ENCODE measurements at regions of chr11 and their contacts with region 1.

Region 1: DNA sequence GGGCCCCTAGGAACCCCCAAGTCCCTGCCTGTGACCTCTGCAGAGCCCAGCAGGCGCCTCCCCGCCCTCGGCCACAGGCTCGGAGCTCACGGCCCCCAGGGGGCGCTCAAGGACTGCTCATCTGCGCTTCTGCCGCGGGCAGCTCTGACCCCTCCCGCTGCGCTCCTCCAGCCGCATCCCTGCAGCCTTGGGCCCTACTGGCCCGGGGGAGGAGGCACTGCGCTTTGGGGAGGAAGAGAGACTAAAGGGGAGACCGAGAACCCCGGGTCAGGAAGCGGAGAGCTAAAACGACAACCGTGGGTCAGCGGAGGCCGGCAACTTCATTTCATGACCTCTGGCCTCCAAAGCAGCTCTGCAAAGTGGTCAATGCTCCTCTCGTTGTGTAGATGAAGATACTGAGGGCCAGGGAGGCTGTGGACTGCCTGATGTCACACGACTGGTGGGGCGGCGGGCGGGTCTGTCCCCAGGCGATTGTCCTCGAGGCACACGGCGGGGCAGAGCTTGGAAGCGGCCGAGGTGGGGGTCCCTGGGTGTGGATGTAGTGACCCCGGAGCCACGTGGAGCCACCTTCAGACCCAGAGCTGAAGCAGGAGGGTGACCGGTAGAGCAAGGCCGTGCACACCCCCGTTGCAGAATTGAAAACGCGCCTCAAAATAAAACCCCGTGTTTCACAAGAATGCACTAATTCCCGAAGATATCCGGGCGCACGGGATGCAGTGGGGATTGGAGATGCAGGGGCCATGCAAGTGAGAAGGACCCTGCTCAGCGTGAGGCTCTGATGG is 2.7 kb upstream of the KRTAP5-6 start:
- DNase-seq: peak; percentile 80 to 88
- ATAC-seq: peak; percentile 82 to 95
- H3K4me3 ChIP-seq: peak overlapping the region; percentile 62
- H3K27ac ChIP-seq: peak overlapping the region; percentile 87 to 92
- H3K4me1 ChIP-seq: no peaks in the 10 kb centered on the region
- CTCF ChIP-seq: peak; percentile 88
- EP300 ChIP-seq: no peak
- POLR2A ChIP-seq: no peak
- RAD21 ChIP-seq: peak; percentile 94 to 99

Region 2: GRCh38 chr11:1478544-1478943 is 215.7 kb before region 1 on chr11:
- CTCF ChIA-PET with region 1: no interaction called
- POLR2A ChIA-PET with region 1: no interaction called
- DNase-seq: no peak
- ATAC-seq: no peak
- H3K4me3 ChIP-seq: no peak overlapping the region
- H3K27ac ChIP-seq: no peak overlapping the region
- H3K4me1 ChIP-seq: no peaks in the 10 kb centered on the region
- CTCF ChIP-seq: no peak
- EP300 ChIP-seq: no peak
- POLR2A ChIP-seq: no peak
- RAD21 ChIP-seq: no peak

Region 3: GRCh38 chr11:1706634-1707400 is 12.6 kb after region 1 on chr11:
- CTCF ChIA-PET with region 1: interaction called, 97 read pairs
- POLR2A ChIA-PET with region 1: no interaction called
- DNase-seq: peak; percentile 38 to 67
- ATAC-seq: peak; percentile 77 to 97
- H3K4me3 ChIP-seq: no peak overlapping the region
- H3K27ac ChIP-seq: no peak overlapping the region
- H3K4me1 ChIP-seq: peaks cover 3% of the 10 kb centered on the region; the same call in 1 of the 3 replicates
- CTCF ChIP-seq: peak; percentile 51
- EP300 ChIP-seq: no peak
- POLR2A ChIP-seq: no peak
- RAD21 ChIP-seq: peak; percentile 74 to 82

Region 4: DNA sequence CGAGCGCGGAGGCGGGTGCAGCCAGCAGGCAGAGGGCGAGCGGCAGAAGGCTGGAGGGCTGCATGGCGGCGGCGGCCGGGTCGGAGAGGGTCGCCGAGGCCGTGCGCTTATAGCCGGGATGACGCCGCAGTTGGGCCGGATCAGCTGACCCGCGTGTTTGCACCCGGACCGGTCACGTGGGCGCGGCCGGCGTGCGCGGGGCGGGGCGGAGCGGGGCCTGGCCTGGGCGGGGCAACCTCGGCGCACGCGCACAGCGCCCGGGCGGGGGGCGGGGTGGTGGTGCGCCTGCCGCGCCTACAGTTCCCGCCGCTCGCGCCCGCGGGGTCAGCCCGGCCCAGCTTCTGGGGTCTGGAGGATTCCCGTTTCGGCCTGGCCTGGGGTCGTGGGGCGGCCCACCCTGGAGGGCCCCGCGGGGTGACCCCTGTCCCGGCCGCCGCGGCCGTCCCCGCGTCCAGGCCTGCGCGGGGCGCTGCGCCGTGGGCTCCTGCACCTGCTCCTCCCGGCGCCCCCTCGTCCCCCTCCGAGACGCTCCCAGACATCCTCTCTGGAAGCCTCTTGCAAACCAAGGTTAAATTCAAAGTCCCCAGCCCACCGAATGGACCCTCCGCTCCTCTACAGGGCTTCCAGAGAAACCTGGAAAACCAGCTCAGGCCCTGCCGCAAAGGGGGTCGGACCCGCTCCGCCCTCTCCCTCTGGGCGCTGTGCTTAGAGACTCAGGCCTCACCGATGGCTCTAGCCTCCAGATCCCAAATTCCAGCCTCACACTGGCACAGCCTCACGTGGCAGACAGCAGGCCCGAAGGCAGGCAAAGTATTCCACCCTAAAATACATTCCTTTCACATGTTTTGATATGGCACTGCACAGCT is 69.8 kb after region 1 on chr11 and contains the start of gene CTSD:
- CTCF ChIA-PET with region 1: interaction called, 29 read pairs
- POLR2A ChIA-PET with region 1: no interaction called
- DNase-seq: peak; percentile 84 to 91
- ATAC-seq: peak; percentile 69 to 70
- H3K4me3 ChIP-seq: peak within 1 kb of the TSS; percentile 100
- H3K27ac ChIP-seq: peak within 1 kb of the TSS; percentile 96 to 97
- H3K4me1 ChIP-seq: peaks cover 37% of the 10 kb centered on the region
- CTCF ChIP-seq: 0 out of 3 replicates have a peak, but pooled peaks have one; percentile 20
- EP300 ChIP-seq: no peak
- POLR2A ChIP-seq: peak; percentile 35
- RAD21 ChIP-seq: peak in 1 of 2 experiments; percentile 12; a peak in 1 of 5 replicates
- polyA plus RNA-seq, gene CTSD: 74.0 and 117 TPM in 2 replicates

Region 5: GRCh38 chr11:1820463-1821325 is 126.4 kb after region 1 on chr11:
- CTCF ChIA-PET with region 1: interaction called, 605 read pairs
- POLR2A ChIA-PET with region 1: interaction called, 3 read pairs
- DNase-seq: no peak
- ATAC-seq: no peak
- H3K4me3 ChIP-seq: no peak overlapping the region
- H3K27ac ChIP-seq: no peak overlapping the region
- H3K4me1 ChIP-seq: peaks cover 5% of the 10 kb centered on the region
- CTCF ChIP-seq: no peak
- EP300 ChIP-seq: no peak
- POLR2A ChIP-seq: no peak
- RAD21 ChIP-seq: no peak

Region 6: GRCh38 chr11:1858154-1858553 is 163.9 kb after region 1 on chr11:
- CTCF ChIA-PET with region 1: interaction called, 18 read pairs
- POLR2A ChIA-PET with region 1: no interaction called
- DNase-seq: no peak
- ATAC-seq: no peak
- H3K4me3 ChIP-seq: no peak overlapping the region
- H3K27ac ChIP-seq: peak overlapping the region in 1 of 2 experiments; percentile 12; a peak in 1 of 6 replicates
- H3K4me1 ChIP-seq: peaks cover 11% of the 10 kb centered on the region
- CTCF ChIP-seq: no peak
- EP300 ChIP-seq: no peak
- POLR2A ChIP-seq: no peak
- RAD21 ChIP-seq: no peak

Region 7: GRCh38 chr11:1906181-1906580 is 211.9 kb after region 1 on chr11:
- CTCF ChIA-PET with region 1: interaction called, 16 read pairs
- POLR2A ChIA-PET with region 1: no interaction called
- DNase-seq: no peak
- ATAC-seq: no peak
- H3K4me3 ChIP-seq: no peak overlapping the region
- H3K27ac ChIP-seq: no peak overlapping the region
- H3K4me1 ChIP-seq: 0 out of 3 replicates have a peak, but pooled peaks cover 2% of the 10 kb centered on the region
- CTCF ChIP-seq: no peak
- EP300 ChIP-seq: no peak
- POLR2A ChIP-seq: no peak
- RAD21 ChIP-seq: no peak

Region 8: DNA sequence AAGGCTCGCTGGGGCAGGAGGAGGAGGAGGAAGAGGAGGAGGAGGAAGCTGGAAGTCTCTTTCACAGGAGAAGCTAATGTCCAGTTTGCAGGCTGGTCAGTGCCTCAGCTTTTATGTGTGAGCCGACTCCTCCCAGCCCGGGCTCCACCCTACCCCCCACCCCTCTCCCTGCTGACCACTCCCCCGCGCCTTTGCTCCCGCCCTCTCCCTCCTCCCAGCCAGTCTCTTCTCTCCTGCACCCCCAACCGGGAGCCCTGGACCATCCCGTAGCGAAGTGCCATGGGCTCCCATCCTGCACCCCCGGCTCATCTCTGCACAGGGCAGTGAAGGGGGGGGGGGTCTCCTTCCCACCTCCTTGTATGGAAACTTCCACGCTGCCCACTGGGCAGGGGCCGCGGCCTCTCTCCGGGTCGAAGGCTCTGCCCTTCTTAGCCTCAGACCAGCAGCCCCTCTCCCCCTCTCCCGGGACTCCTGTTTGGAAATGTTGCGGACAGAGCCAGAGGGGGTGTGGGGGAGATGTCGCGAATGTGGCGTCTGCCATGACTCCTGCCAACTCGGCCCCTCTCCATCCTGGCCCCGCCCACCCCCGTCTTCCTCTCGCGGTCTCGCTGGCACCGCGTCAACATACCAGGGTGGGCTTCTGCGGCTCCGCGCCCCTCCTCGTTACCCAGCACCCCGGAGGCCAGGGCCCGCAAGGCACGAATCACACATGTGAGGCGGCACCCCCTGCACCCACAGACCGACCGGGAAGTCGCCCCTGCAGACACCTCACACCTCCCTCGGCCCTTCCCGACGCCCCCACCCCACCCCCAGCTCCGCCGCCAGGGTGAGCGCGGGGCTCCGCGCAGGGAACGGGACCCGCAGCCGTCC is 443.2 kb after region 1 on chr11:
- CTCF ChIA-PET with region 1: no interaction called
- POLR2A ChIA-PET with region 1: no interaction called
- DNase-seq: peak; percentile 76 to 91
- ATAC-seq: peak; percentile 69 to 89
- H3K4me3 ChIP-seq: peak overlapping the region; percentile 52
- H3K27ac ChIP-seq: peak overlapping the region; percentile 17 to 65; a peak in 4 of 6 replicates
- H3K4me1 ChIP-seq: peaks cover 19% of the 10 kb centered on the region
- CTCF ChIP-seq: no peak
- EP300 ChIP-seq: no peak
- POLR2A ChIP-seq: no peak
- RAD21 ChIP-seq: no peak

Measured in A549 (cell line).